Activated CD4-positive, alpha-beta T cell treated with anti-CD3 and anti-CD28 coated beads, Interleukin-2, amount 10 ng/mL, durations not matched to agents 24 days and 14 days (primary cell): ENCODE measurements at regions of chr2 and their contacts with region 1.

Region 1: GRCh38 chr2:161160226-161161069 is at the start of gene TANK:
- DNase-seq: peak; percentile 96
- H3K4me3 Mint-ChIP-seq: peak within 1 kb of the TSS; percentile 97
- H3K27ac Mint-ChIP-seq: peak within 1 kb of the TSS; percentile 98
- H3K4me1 Mint-ChIP-seq: peaks cover 55% of the 10 kb centered on the region
- H3K27me3 Mint-ChIP-seq: no peaks in the 10 kb centered on the region
- total RNA-seq, gene TANK: 91.2 and 97.2 TPM in 2 replicates

Region 2: DNA sequence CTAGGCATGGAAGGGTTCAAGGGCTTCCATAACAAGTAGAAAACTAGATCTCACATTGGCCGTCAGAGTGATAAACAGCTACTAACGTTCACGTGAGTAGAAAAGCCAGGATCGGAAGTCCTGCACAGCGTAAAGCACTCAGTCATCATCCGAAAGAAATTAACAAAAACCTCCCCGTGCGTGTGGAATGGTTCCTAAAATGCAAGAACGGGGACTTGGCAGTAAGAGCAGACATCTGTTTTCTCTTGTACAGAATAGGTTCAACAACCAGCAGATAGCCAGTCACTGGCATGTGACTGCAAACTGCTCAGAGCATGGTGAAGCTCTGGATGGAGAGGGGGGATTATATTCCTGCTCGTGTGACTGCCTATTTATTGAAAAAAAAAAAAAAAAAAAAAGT is 853.5 kb before region 1 on chr2:
- intact Hi-C with region 1: loop called (anchors 10 kb)
- DNase-seq: no peak
- H3K4me3 Mint-ChIP-seq: no peak overlapping the region
- H3K27ac Mint-ChIP-seq: no peak overlapping the region
- H3K4me1 Mint-ChIP-seq: no peaks in the 10 kb centered on the region
- H3K27me3 Mint-ChIP-seq: no peaks in the 10 kb centered on the region

Region 3: GRCh38 chr2:161217597-161218185 is 57.2 kb after region 1 on chr2:
- intact Hi-C with region 1: loop called (anchors 5 kb)
- DNase-seq: no peak
- H3K4me3 Mint-ChIP-seq: no peak overlapping the region
- H3K27ac Mint-ChIP-seq: no peak overlapping the region
- H3K4me1 Mint-ChIP-seq: peaks cover 21% of the 10 kb centered on the region
- H3K27me3 Mint-ChIP-seq: no peaks in the 10 kb centered on the region

Region 4: GRCh38 chr2:161243905-161244304 is 83.5 kb after region 1 on chr2:
- intact Hi-C with region 1: loop called (anchors 1 kb)
- DNase-seq: peak; percentile 70
- H3K4me3 Mint-ChIP-seq: peak overlapping the region; percentile 94
- H3K27ac Mint-ChIP-seq: peak overlapping the region; percentile 97
- H3K4me1 Mint-ChIP-seq: peaks cover 43% of the 10 kb centered on the region
- H3K27me3 Mint-ChIP-seq: no peaks in the 10 kb centered on the region